B cell (primary cell): ENCODE measurements at regions of chr7 and their contacts with region 1.

Region 1: GRCh38 chr7:24812310-24812945 is 55.2 kb upstream of the GSDME start:
- DNase-seq: peak; percentile 70
- ATAC-seq: peak; percentile 67
- H3K4me3 ChIP-seq: no peak overlapping the region
- H3K4me3 Mint-ChIP-seq: no peak overlapping the region
- H3K27ac ChIP-seq: no peak overlapping the region
- H3K27ac Mint-ChIP-seq: no peak overlapping the region
- H3K4me1 ChIP-seq: no peaks in the 10 kb centered on the region
- H3K4me1 Mint-ChIP-seq: no peaks in the 10 kb centered on the region
- H3K27me3 ChIP-seq: no peaks in the 10 kb centered on the region
- H3K27me3 Mint-ChIP-seq: no peaks in the 10 kb centered on the region
- CTCF ChIP-seq: peak; percentile 96

Region 2: GRCh38 chr7:24750441-24751055 is 61.9 kb before region 1 on chr7:
- CTCF ChIA-PET with region 1: interaction called, 10 read pairs
- POLR2A ChIA-PET with region 1: no interaction called
- intact Hi-C with region 1: no loop called
- DNase-seq: no peak
- ATAC-seq: no peak
- H3K4me3 ChIP-seq: no peak overlapping the region
- H3K4me3 Mint-ChIP-seq: no peak overlapping the region
- H3K27ac ChIP-seq: no peak overlapping the region
- H3K27ac Mint-ChIP-seq: no peak overlapping the region
- H3K4me1 ChIP-seq: no peaks in the 10 kb centered on the region
- H3K4me1 Mint-ChIP-seq: peaks cover 6% of the 10 kb centered on the region
- H3K27me3 ChIP-seq: peaks cover 0 to 2% (median under 1%) of the 10 kb centered on the region in 4 experiments
- H3K27me3 Mint-ChIP-seq: peaks cover 4% of the 10 kb centered on the region
- CTCF ChIP-seq: no peak

Region 3: DNA sequence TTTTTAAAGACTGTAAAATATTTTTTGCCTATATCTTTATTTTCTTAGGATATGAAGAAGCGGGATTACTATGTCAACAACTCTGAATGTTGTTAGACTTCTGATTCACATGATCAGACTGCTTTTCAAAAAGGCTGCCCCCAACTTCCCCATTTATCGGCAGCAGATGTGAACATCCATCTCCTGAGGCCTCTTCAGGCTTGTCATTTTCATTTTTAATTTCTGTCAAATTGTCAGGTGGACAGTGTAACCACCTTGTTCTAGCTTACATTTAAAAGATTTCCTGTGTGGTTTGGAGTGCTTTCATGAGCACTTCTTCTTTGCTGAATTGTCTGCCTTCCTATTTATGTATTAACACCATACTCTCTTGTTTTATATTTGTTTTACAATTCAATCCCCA is 23.7 kb after region 1 on chr7:
- CTCF ChIA-PET with region 1: interaction called, 14 read pairs
- POLR2A ChIA-PET with region 1: no interaction called
- intact Hi-C with region 1: no loop called
- DNase-seq: peak; percentile 89
- ATAC-seq: peak; percentile 80
- H3K4me3 ChIP-seq: peak overlapping the region in 1 of 5 experiments; percentile 46
- H3K4me3 Mint-ChIP-seq: peak overlapping the region; percentile 80
- H3K27ac ChIP-seq: peak overlapping the region; percentile 97
- H3K27ac Mint-ChIP-seq: peak overlapping the region; percentile 98
- H3K4me1 ChIP-seq: peaks cover 72 to 74% of the 10 kb centered on the region in 2 donors
- H3K4me1 Mint-ChIP-seq: peaks cover 75% of the 10 kb centered on the region
- H3K27me3 ChIP-seq: no peaks in the 10 kb centered on the region
- H3K27me3 Mint-ChIP-seq: no peaks in the 10 kb centered on the region
- CTCF ChIP-seq: no peak

Region 4: DNA sequence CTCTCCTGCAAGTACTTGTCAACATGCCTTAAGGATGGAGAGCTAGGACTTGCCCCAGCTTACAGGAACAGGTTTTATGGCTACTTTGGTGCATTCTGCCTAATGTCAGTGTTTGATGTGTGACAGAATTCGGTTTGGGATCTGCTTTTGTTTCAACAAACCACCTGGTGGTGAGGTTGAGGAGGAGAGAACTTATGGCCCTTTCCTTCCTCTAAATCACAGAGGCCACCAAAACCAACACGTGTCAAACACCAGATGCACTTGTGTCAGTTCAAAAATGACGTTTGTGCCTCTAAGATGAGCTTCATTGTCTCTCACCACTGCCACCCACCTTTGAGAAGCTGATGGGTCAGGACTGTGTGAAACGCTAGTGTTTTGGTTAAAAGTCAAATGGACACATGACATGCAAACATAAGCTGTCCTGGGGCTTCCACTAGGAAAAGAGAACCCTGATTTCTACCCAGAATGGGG is 83.6 kb after region 1 on chr7:
- CTCF ChIA-PET with region 1: interaction called, 13 read pairs
- POLR2A ChIA-PET with region 1: no interaction called
- intact Hi-C with region 1: no loop called
- DNase-seq: peak; percentile 69
- ATAC-seq: peak; percentile 90
- H3K4me3 ChIP-seq: no peak overlapping the region
- H3K4me3 Mint-ChIP-seq: no peak overlapping the region
- H3K27ac ChIP-seq: peak overlapping the region in 1 of 2 donors; percentile 51
- H3K27ac Mint-ChIP-seq: peak overlapping the region; percentile 76
- H3K4me1 ChIP-seq: peaks cover 33 to 36% of the 10 kb centered on the region in 2 donors
- H3K4me1 Mint-ChIP-seq: peaks cover 55% of the 10 kb centered on the region
- H3K27me3 ChIP-seq: no peaks in the 10 kb centered on the region
- H3K27me3 Mint-ChIP-seq: no peaks in the 10 kb centered on the region
- CTCF ChIP-seq: peak; percentile 22

Region 5: GRCh38 chr7:24991353-24991752 is 178.9 kb after region 1 on chr7:
- CTCF ChIA-PET with region 1: interaction called, 12 read pairs
- POLR2A ChIA-PET with region 1: no interaction called
- intact Hi-C with region 1: no loop called
- DNase-seq: no peak
- ATAC-seq: no peak
- H3K4me3 ChIP-seq: no peak overlapping the region
- H3K4me3 Mint-ChIP-seq: no peak overlapping the region
- H3K27ac ChIP-seq: no peak overlapping the region
- H3K27ac Mint-ChIP-seq: no peak overlapping the region
- H3K4me1 ChIP-seq: no peaks in the 10 kb centered on the region
- H3K4me1 Mint-ChIP-seq: no peaks in the 10 kb centered on the region
- H3K27me3 ChIP-seq: peaks cover 0 to 5% (median 0%) of the 10 kb centered on the region in 4 experiments
- H3K27me3 Mint-ChIP-seq: no peaks in the 10 kb centered on the region
- CTCF ChIP-seq: no peak

Region 6: DNA sequence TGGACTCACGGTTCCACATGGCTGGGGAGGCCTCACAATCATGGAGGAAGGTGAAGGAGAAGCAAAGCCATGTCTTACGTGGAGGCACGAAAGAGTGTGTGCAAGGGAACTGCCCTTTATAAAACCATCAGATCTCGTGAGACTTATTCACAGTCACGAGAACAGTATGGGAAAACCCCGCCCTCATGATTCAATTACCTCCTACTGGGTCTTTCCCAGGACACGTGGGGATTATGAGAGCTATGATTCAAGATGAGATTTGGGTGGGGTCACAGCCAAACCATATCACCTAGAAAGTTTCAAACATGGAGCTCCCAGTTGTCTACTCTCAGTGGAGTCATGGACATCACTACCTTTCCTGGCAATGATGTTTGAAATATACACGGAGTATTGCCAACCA is 263.0 kb after region 1 on chr7:
- CTCF ChIA-PET with region 1: interaction called, 246 read pairs
- POLR2A ChIA-PET with region 1: no interaction called
- intact Hi-C with region 1: loop called (anchors 1 kb)
- DNase-seq: no peak
- ATAC-seq: no peak
- H3K4me3 ChIP-seq: no peak overlapping the region
- H3K4me3 Mint-ChIP-seq: no peak overlapping the region
- H3K27ac ChIP-seq: no peak overlapping the region
- H3K27ac Mint-ChIP-seq: no peak overlapping the region
- H3K4me1 ChIP-seq: no peaks in the 10 kb centered on the region
- H3K4me1 Mint-ChIP-seq: no peaks in the 10 kb centered on the region
- H3K27me3 ChIP-seq: no peaks in the 10 kb centered on the region
- H3K27me3 Mint-ChIP-seq: peaks cover 3% of the 10 kb centered on the region
- CTCF ChIP-seq: no peak

Region 7: DNA sequence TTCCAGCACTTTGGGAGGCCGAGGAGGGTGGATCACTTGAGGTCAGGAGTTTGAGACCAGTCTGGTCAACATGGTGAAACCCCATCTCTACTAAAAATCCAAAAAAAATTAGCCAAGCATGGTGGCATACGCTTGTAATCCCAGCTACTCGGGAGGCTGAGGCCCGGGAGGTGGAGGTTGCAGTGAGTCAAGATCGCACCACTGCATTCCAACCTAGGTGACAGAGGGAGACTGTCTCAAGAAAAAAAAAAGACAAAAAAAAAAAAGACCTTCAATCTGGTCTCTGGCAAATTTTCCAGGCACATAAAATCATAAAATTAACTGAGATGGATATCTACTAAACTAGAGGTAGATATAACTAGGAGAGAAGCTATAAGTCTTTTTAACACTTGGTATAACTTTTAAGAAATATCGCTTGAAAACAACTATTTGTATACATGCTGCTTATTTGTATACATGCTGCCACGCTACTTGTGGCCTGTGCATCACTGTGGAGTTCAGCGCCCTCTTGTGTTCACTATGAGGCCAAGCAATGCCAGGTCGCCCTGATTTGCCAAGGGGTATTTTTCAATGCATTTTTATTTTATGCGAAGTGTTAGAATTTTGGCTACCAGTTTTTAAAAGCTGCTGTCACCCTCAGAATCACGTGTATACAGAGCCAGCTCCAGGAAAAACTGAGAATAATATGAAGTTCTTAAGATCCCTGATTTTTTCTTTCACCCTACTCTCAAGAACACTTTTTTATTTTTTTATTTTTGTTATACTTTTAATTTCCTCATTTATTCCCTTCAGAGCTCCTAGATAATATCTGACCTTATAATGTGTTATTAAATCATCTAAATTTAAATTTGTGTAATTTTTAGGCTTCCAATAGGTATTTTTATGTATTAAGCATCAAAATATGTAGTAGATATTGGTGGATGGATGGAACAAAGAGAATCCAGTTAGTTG is 285.9 kb after region 1 on chr7:
- CTCF ChIA-PET with region 1: interaction called, 354 read pairs
- POLR2A ChIA-PET with region 1: no interaction called
- intact Hi-C with region 1: loop called (anchors 1 kb)
- DNase-seq: peak; percentile 76
- ATAC-seq: peak; percentile 83
- H3K4me3 ChIP-seq: no peak overlapping the region
- H3K4me3 Mint-ChIP-seq: no peak overlapping the region
- H3K27ac ChIP-seq: no peak overlapping the region
- H3K27ac Mint-ChIP-seq: no peak overlapping the region
- H3K4me1 ChIP-seq: peaks cover 0 to 4% of the 10 kb centered on the region in 2 donors
- H3K4me1 Mint-ChIP-seq: peaks cover 4% of the 10 kb centered on the region
- H3K27me3 ChIP-seq: no peaks in the 10 kb centered on the region
- H3K27me3 Mint-ChIP-seq: no peaks in the 10 kb centered on the region
- CTCF ChIP-seq: peak; percentile 95

Region 8: GRCh38 chr7:25223206-25223605 is 410.8 kb after region 1 on chr7:
- CTCF ChIA-PET with region 1: no interaction called
- POLR2A ChIA-PET with region 1: no interaction called
- intact Hi-C with region 1: no loop called
- DNase-seq: no peak
- ATAC-seq: no peak
- H3K4me3 ChIP-seq: no peak overlapping the region
- H3K4me3 Mint-ChIP-seq: no peak overlapping the region
- H3K27ac ChIP-seq: no peak overlapping the region
- H3K27ac Mint-ChIP-seq: no peak overlapping the region
- H3K4me1 ChIP-seq: no peaks in the 10 kb centered on the region
- H3K4me1 Mint-ChIP-seq: no peaks in the 10 kb centered on the region
- H3K27me3 ChIP-seq: peaks cover 0 to 12% (median 2%) of the 10 kb centered on the region in 4 experiments
- H3K27me3 Mint-ChIP-seq: peaks cover 41% of the 10 kb centered on the region
- CTCF ChIP-seq: no peak

Region 9: GRCh38 chr7:25500393-25500921 is 688.0 kb after region 1 on chr7:
- CTCF ChIA-PET with region 1: no interaction called
- POLR2A ChIA-PET with region 1: no interaction called
- intact Hi-C with region 1: no loop called
- DNase-seq: no peak
- ATAC-seq: no peak
- H3K4me3 ChIP-seq: no peak overlapping the region
- H3K4me3 Mint-ChIP-seq: no peak overlapping the region
- H3K27ac ChIP-seq: no peak overlapping the region
- H3K27ac Mint-ChIP-seq: no peak overlapping the region
- H3K4me1 ChIP-seq: peaks cover 17% of the 10 kb centered on the region in 2 donors
- H3K4me1 Mint-ChIP-seq: peaks cover 12% of the 10 kb centered on the region
- H3K27me3 ChIP-seq: peaks cover 0 to 4% (median 0%) of the 10 kb centered on the region in 4 experiments
- H3K27me3 Mint-ChIP-seq: peaks cover 6% of the 10 kb centered on the region
- CTCF ChIP-seq: no peak